K562 (cell line): ENCODE measurements at regions of chr6 and their contacts with region 1.

Region 1: DNA sequence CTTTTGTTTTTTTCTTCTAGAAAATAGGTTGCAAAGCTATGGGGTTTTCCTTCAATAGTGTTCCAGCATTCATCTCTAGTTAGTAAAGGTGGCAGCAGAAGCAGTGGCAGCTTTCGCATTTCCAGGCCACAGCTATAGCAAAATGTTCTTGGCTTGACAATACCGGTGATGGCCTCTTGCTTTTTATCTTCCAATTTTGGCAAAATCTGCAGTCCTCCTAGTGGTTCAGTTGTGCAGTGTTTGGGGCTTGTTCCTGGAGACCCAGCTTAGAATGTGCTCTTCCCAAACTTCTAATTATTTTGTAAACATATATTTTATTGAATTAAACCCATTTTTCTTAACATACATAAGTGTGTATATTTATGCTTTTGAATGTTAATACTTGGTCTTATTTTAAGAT is 370.6 kb upstream of the MAN1A1 start:
- DNase-seq: peak; percentile 13 to 55 (median 22)
- ATAC-seq: peak; percentile 96
- H3K4me3 ChIP-seq: no peak overlapping the region
- H3K27ac ChIP-seq: no peak overlapping the region
- H3K4me1 ChIP-seq: no peaks in the 10 kb centered on the region
- H3K27me3 ChIP-seq: no peaks in the 10 kb centered on the region
- CTCF ChIP-seq: peak; percentile 35 to 75 (median 52); a peak in 5 of 6 replicates
- EP300 ChIP-seq: no peak
- POLR2A ChIP-seq: no peak
- RAD21 ChIP-seq: peak; percentile 24 to 50; a peak in 3 of 4 replicates

Region 2: DNA sequence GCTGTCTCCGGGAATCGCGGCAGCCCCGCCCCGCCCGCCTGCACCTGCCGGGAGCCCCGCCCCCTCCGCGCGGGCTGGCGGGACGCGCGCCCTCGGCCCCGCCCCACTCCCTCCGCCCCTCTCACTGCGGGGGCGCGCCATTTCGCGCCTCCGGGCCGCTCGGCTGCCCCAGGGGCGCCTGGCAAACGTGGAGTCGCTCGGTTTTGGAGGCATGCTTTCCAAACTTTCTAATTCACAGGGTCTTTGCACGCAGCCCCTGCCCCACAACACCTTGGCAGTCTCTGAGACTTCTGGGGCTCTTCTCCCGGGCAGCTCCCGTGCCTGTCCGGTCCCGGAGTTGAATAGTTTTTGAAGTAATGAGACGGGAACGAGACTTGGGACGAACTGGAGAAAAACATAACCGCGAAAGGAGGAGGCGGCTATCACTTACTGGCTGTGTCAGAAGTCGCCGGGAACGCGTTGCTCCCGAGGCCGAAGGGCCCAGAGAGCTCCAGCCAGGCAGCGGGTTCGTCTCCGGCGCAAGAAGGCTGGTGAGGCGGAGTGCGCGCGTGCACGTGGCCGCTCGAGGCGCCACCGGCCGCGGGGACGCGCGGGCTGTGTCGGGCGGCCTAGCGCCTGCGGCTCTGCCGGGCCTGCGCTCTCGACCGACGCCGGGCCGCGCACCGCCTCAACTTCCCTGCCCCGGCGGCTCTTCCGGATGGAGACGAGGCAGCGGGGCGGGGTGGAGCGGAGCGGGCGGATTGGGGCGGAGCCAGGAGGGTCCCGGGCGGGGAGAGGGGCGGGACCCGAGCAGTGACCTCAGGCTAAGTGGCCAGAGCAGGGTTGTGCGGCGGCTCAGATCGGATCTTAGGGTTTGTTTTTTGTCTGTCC is 785.5 kb before region 1 on chr6 and contains the start of gene MCM9:
- CTCF ChIA-PET with region 1: no interaction called
- POLR2A ChIA-PET with region 1: no interaction called
- in situ Hi-C with region 1: no loop called
- intact Hi-C with region 1: loop called (anchors 10 kb)
- DNase-seq: peak; percentile 96 to 97 (median 96)
- ATAC-seq: peak; percentile 98
- H3K4me3 ChIP-seq: peak within 1 kb of the TSS; percentile 75
- H3K27ac ChIP-seq: peak within 1 kb of the TSS; percentile 99
- H3K4me1 ChIP-seq: peaks cover 8 to 14% of the 10 kb centered on the region in 2 experiments; a peak in 4 of 5 replicates
- H3K27me3 ChIP-seq: no peaks in the 10 kb centered on the region
- CTCF ChIP-seq: no peak
- EP300 ChIP-seq: no peak; the same call in 1 of the 2 replicates
- POLR2A ChIP-seq: peak; percentile 90
- RAD21 ChIP-seq: no peak
- polyA plus RNA-seq, gene MCM9: 4.8 to 5.8 TPM

Region 3: DNA sequence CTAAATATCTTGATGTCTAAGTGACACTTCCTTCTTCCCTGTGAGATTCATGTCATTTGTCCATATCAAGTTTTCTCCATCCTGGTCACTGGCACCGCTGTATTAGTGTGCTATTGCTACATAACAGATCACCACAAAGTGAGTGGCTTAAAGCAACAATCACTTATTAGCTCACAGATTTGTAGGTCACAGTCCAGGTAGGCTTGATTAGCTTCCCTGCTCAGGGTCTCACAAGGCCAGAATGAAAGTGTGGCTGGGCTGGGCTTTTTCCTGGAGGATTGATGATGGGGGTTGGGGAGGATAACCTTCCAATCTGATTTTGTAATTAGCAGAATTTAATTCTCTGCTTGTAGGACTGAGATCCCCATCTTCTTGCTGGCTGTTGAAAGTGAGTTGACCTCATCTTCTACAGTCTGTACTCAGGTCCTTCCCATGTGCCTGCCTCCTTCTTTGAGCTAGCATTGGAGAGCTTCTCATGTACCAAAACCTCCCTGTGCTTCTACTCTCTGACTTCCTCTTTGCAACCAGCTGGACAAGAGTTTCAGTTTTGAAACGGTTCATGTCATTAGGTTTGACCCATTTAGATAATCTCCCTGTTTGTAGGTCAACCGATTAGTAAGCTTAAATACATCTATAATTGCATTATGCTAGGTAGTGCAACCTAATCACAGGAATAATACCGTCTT is 218.2 kb before region 1 on chr6:
- CTCF ChIA-PET with region 1: no interaction called
- POLR2A ChIA-PET with region 1: no interaction called
- in situ Hi-C with region 1: no loop called
- intact Hi-C with region 1: no loop called
- DNase-seq: no peak
- ATAC-seq: no peak
- H3K4me3 ChIP-seq: no peak overlapping the region
- H3K27ac ChIP-seq: no peak overlapping the region
- H3K4me1 ChIP-seq: peaks cover 4 to 7% of the 10 kb centered on the region in 2 experiments; a peak in 2 of 5 replicates
- H3K27me3 ChIP-seq: no peaks in the 10 kb centered on the region
- CTCF ChIP-seq: no peak
- EP300 ChIP-seq: no peak
- POLR2A ChIP-seq: no peak
- RAD21 ChIP-seq: no peak

Region 4: DNA sequence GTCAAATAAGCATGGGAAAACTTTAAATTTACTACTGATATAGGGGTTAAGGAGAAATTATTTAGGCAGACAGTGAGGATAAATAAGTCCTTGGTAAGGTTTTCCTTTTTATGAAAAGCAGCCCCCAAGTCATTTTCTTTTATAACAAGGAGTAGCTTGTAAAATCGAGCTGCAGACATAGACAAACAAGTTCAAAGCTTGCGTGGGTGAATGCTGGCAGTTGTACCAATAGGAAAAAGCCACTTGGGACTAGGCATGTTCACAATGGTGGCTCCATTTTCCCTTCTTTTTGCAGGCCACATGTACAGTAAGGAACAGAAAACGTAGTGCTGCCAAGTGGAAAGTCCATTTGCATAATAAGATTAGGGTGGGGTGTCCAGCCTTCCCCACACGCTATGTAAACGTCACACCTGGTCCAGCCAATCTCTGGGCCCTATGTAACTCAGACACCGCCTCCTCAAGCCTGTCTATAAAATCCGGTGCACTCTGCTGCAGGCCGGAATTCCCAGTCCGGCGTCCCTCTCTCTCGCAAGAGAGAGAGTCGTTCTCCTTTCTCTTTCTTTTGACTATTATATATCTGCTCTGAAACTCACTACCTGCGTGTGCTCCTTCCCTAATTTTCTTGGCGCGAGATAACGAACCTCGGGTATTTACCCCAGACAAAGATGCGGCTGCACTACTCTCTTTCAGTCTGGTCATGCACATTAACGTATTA is 153.5 kb before region 1 on chr6:
- CTCF ChIA-PET with region 1: no interaction called
- POLR2A ChIA-PET with region 1: no interaction called
- in situ Hi-C with region 1: no loop called
- intact Hi-C with region 1: loop called (anchors 10 kb)
- DNase-seq: peak in 3 of 4 experiments; percentile 12 to 91 (median 59)
- ATAC-seq: peak; percentile 99
- H3K4me3 ChIP-seq: peak overlapping the region; percentile 42
- H3K27ac ChIP-seq: peak overlapping the region; percentile 84
- H3K4me1 ChIP-seq: peaks cover 0 to 3% of the 10 kb centered on the region in 2 experiments; a peak in 2 of 5 replicates
- H3K27me3 ChIP-seq: no peaks in the 10 kb centered on the region
- CTCF ChIP-seq: no peak
- EP300 ChIP-seq: no peak
- POLR2A ChIP-seq: peak; percentile 96
- RAD21 ChIP-seq: 0 out of 4 replicates have a peak, but pooled peaks of 1 of the 2 experiments have one; percentile 6

Region 5: GRCh38 chr6:119781365-119781764 is 61.2 kb after region 1 on chr6:
- CTCF ChIA-PET with region 1: no interaction called
- POLR2A ChIA-PET with region 1: no interaction called
- in situ Hi-C with region 1: no loop called
- intact Hi-C with region 1: no loop called
- DNase-seq: no peak
- ATAC-seq: no peak
- H3K4me3 ChIP-seq: no peak overlapping the region
- H3K27ac ChIP-seq: no peak overlapping the region
- H3K4me1 ChIP-seq: no peaks in the 10 kb centered on the region
- H3K27me3 ChIP-seq: no peaks in the 10 kb centered on the region
- CTCF ChIP-seq: no peak
- EP300 ChIP-seq: no peak
- POLR2A ChIP-seq: no peak
- RAD21 ChIP-seq: no peak